ENCODE measurements at regions of chr1 and their contacts with region 1.

Region 1: GRCh38 chr1:27154991-27155781 is at the start of gene SLC9A1:
- DNase-seq: peak; percentile 95
- ATAC-seq: peak; percentile 90
- H3K4me3 Mint-ChIP-seq: peak within 1 kb of the TSS; percentile 81
- H3K27ac Mint-ChIP-seq: peak within 1 kb of the TSS; percentile 97
- H3K4me1 Mint-ChIP-seq: peaks cover 42% of the 10 kb centered on the region
- H3K27me3 Mint-ChIP-seq: no peaks in the 10 kb centered on the region
- total RNA-seq, gene SLC9A1: 15.6 to 20.4 TPM

Region 2: DNA sequence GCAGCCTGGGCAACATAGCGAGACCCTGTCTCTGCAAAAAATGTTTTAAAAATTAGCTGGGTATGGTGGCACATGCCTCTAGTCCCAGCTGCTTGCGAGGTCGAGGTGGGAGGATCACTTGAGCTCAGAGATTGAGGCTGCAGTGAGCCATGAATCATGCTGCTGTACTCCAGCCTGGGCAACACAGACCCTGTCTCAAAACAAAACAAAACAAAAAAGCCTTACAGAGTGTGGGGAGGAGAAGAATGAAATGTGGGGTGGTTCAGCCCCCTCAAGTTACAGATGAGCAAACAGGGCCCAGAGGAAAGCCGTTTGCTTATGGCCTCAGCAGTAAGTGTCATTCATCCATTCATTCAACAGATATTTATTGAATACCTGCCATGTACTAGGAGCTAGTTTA is 584.9 kb before region 1 on chr1:
- CTCF ChIA-PET with region 1: no interaction called
- POLR2A ChIA-PET with region 1: no interaction called
- intact Hi-C with region 1: no loop called
- DNase-seq: peak; percentile 37
- ATAC-seq: peak; percentile 90
- H3K4me3 Mint-ChIP-seq: no peak overlapping the region
- H3K27ac Mint-ChIP-seq: peak overlapping the region; percentile 52
- H3K4me1 Mint-ChIP-seq: peaks cover 23% of the 10 kb centered on the region
- H3K27me3 Mint-ChIP-seq: no peaks in the 10 kb centered on the region

Region 3: GRCh38 chr1:26921540-26922430 is 233.4 kb before region 1 on chr1 and contains the start of gene NUDC:
- CTCF ChIA-PET with region 1: no interaction called
- POLR2A ChIA-PET with region 1: interaction called, 3 read pairs
- intact Hi-C with region 1: loop called in 1 of 2 experiments (anchors 1 kb)
- DNase-seq: peak; percentile 98
- ATAC-seq: peak; percentile 98
- H3K4me3 Mint-ChIP-seq: peak within 1 kb of the TSS; percentile 82
- H3K27ac Mint-ChIP-seq: peak within 1 kb of the TSS; percentile 90
- H3K4me1 Mint-ChIP-seq: peaks cover 38% of the 10 kb centered on the region
- H3K27me3 Mint-ChIP-seq: no peaks in the 10 kb centered on the region
- total RNA-seq, gene NUDC: 95.9 to 101 TPM

Region 4: DNA sequence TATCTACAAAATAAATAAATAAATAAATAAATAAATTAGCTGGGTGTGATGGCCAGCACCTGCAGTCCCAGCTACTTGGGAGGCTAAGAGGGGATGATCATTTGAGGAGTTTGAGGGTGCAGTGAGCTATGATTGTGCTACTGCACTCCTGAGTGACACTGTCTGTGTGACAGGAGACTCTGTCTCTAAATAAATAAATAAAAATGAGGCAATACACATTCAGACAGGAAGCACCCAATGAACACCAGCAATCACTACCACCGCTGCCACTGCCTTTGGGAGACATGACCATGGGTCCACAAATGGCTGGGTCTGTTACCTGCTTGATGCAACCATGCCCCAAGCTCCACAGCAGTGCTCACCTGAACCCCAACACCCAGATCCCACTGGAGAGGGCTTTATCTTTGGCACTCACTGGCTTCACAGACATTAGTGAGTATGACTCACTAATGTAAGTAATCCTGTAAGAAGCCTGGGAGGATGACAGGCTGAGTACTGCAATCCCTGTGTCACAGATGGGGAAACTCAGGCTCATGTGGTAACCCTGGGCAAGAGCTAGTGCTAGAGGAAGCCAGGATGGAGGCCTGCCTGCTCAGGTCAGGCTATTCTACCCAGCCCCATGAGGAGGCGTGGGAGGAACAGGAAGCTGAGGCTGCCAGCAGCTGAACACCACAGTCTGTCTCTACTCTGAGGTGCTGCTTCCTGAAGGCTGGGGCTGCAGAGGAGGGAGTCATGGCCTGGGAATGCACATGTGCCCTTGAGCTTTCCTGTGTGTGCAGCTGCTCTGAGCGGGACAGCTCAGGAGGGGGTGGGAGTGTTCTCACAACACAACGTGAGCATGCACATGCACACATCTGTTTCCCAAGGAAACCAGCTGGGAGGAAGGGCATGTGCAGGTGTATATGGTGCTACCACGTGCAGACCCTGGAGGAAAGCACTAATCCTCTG is 43.3 kb before region 1 on chr1:
- CTCF ChIA-PET with region 1: interaction called, 11 read pairs
- POLR2A ChIA-PET with region 1: interaction called, 13 read pairs
- intact Hi-C with region 1: loop called (anchors 1 to 2 kb)
- DNase-seq: peak; percentile 88
- ATAC-seq: peak; percentile 99
- H3K4me3 Mint-ChIP-seq: no peak overlapping the region
- H3K27ac Mint-ChIP-seq: peak overlapping the region; percentile 82
- H3K4me1 Mint-ChIP-seq: peaks cover 45% of the 10 kb centered on the region
- H3K27me3 Mint-ChIP-seq: no peaks in the 10 kb centered on the region

Region 5: GRCh38 chr1:27142464-27142863 is 12.7 kb before region 1 on chr1:
- CTCF ChIA-PET with region 1: interaction called, 11 read pairs
- POLR2A ChIA-PET with region 1: interaction called, 44 read pairs
- intact Hi-C with region 1: loop called in 1 of 2 experiments (anchors 1 kb)
- DNase-seq: peak; percentile 69
- ATAC-seq: peak; percentile 88
- H3K4me3 Mint-ChIP-seq: no peak overlapping the region
- H3K27ac Mint-ChIP-seq: peak overlapping the region; percentile 78
- H3K4me1 Mint-ChIP-seq: peaks cover 62% of the 10 kb centered on the region
- H3K27me3 Mint-ChIP-seq: no peaks in the 10 kb centered on the region

Region 6: GRCh38 chr1:27321813-27322577 is 166.8 kb after region 1 on chr1 and contains the start of gene TMEM222:
- CTCF ChIA-PET with region 1: no interaction called
- POLR2A ChIA-PET with region 1: no interaction called
- intact Hi-C with region 1: loop called in 1 of 2 experiments (anchors 1 kb)
- DNase-seq: peak; percentile 99
- ATAC-seq: peak; percentile 98
- H3K4me3 Mint-ChIP-seq: peak within 1 kb of the TSS; percentile 94
- H3K27ac Mint-ChIP-seq: peak within 1 kb of the TSS; percentile 90
- H3K4me1 Mint-ChIP-seq: peaks cover 41% of the 10 kb centered on the region
- H3K27me3 Mint-ChIP-seq: no peaks in the 10 kb centered on the region
- total RNA-seq, gene TMEM222: 27.5 to 31.2 TPM

Region 7: DNA sequence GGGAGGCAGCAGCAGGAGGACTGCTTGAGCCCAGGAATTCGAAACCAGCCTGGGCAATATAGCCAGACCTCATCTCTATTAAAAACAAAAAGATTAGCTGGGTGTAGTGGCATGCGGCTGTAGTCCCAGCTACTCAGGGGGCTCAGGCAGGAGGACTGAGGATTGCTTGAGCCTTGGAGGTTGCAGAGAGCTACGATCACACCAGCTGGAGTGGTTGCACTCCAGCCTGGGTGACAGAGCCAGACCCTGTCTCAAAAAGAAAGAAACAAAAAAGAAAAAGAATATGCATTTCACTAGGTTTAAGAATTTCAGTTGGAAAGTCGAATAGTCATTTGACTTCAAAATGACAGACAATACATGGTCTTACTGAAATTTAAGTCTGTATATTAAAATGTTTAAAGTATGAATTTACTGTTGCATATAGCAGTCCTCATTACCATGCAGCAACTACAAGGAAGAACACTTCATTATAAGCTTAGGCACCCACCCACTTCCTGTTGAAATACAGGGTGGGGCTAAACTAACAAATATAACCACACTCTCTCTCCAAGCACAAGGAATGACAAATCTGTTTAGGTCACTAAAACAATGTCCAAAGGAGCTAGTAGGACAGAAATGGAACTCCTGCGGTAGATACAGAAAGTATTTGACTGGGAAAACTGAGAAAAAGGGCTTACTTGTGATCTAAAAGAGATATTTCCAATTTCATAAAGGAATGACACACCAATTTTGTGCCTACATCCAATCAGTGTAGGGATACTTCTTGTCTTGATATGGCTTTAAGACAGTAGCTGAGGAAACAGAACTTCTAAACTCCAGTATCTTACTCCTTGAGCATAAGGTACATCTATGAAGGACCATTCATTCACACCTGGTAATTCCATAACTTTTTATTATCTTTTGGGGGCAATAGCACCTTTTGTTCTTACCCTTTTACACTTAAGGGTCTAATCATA is 281.3 kb after region 1 on chr1:
- CTCF ChIA-PET with region 1: no interaction called
- POLR2A ChIA-PET with region 1: no interaction called
- intact Hi-C with region 1: no loop called
- DNase-seq: no peak
- ATAC-seq: peak; percentile 64
- H3K4me3 Mint-ChIP-seq: no peak overlapping the region
- H3K27ac Mint-ChIP-seq: peak overlapping the region; percentile 73
- H3K4me1 Mint-ChIP-seq: peaks cover 72% of the 10 kb centered on the region
- H3K27me3 Mint-ChIP-seq: no peaks in the 10 kb centered on the region

Measured in activated CD4-positive, alpha-beta T cell treated with anti-CD3 and anti-CD28 coated beads for 36 hours (primary cell).